ENCODE measurements at regions of chr17 and their contacts with region 1.

Region 1: DNA sequence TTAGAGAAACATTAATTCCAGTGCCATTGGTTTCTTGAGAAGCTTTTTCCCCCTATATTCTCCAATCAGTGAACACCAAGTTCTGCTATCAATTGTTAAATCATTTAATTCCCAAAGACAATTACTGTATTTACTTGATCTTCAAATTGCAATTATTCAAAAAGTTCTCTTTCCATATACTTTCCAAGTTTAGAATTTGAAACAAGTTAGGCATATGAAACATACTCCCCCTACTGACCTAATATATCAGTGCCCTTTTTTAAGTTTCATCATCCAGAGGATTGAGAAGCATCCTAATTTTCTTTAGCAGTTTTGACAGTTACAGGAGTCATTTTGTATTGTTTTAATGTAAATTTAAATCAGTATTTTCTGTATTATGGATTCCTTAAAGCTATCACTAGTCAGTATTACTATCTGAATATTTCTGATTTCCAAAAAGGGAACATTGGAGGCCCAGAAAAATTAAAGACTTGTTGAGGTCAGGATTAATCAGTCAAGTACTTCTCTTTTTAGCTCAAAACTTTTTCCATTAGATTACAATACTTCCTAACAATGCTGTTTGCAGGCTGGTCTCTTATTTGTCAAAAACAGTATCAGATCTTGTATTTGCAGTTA is 16.3 kb downstream of the MEIOC start:
- DNase-seq: peak; percentile 34
- H3K4me3 ChIP-seq: no peak overlapping the region
- H3K27ac ChIP-seq: no peak overlapping the region
- H3K4me1 ChIP-seq: 0 out of 4 replicates have a peak, but pooled peaks cover 0 to 3% of the 10 kb centered on the region in 2 experiments
- H3K27me3 ChIP-seq: no peaks in the 10 kb centered on the region
- CTCF ChIP-seq: peak; percentile 76
- EP300 ChIP-seq: no peak
- RAD21 ChIP-seq: peak; percentile 57

Region 2: GRCh38 chr17:44599298-44600175 is 73.0 kb before region 1 on chr17:
- CTCF ChIA-PET with region 1: no interaction called
- POLR2A ChIA-PET with region 1: no interaction called
- DNase-seq: no peak
- H3K4me3 ChIP-seq: no peak overlapping the region
- H3K27ac ChIP-seq: peak overlapping the region; percentile 64 to 73
- H3K4me1 ChIP-seq: peaks cover 10 to 21% of the 10 kb centered on the region in 2 experiments; a peak in 2 of 4 replicates
- H3K27me3 ChIP-seq: no peaks in the 10 kb centered on the region
- CTCF ChIP-seq: no peak
- EP300 ChIP-seq: no peak
- RAD21 ChIP-seq: no peak

Region 3: DNA sequence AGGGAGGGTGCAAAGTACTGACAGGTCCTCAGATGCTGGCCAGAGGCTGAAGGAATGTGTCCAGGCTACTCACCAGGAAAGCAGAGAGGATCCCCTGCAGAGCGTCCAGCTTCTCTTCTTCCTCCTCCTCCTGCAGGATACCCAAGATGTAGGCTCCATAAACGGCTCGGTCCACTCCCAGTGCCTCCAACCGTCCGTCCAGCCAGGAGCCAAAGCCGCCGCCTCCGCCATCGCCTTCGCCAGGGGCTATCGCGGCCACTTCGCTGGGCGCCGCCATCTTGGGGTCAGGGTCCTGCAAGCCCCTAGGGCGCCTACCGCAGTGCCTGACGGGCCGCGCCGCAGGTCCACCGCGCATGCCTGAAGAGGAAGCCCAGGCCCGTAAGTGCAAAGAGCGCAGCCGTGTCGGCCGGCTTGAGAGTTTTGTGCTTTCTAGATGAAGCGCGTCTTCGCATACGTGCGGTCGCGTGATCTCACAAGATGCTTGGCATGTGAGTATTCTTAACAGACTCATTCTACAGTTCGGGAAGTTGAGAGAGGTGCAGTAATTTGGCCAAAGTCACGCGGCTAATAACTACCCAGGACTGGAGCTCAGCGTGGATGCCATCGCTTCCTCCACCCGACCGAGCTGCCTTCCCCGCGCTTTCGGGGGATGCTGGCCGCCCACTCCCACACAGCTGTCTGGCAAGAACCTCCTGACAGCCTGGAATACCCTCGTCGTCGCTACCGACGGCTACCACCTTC is 17.1 kb after region 1 on chr17 and contains the start of gene CCDC43:
- CTCF ChIA-PET with region 1: interaction called, 29 read pairs
- POLR2A ChIA-PET with region 1: no interaction called
- DNase-seq: peak; percentile 96
- H3K4me3 ChIP-seq: peak within 1 kb of the TSS; percentile 78 to 84
- H3K27ac ChIP-seq: peak within 1 kb of the TSS; percentile 78 to 87
- H3K4me1 ChIP-seq: peaks cover 0 to 7% of the 10 kb centered on the region in 2 experiments; a peak in 1 of 4 replicates
- H3K27me3 ChIP-seq: no peaks in the 10 kb centered on the region
- CTCF ChIP-seq: no peak
- EP300 ChIP-seq: no peak
- RAD21 ChIP-seq: no peak
- polyA plus RNA-seq, gene CCDC43: 6.4 and 8.9 TPM in 2 replicates

Region 4: DNA sequence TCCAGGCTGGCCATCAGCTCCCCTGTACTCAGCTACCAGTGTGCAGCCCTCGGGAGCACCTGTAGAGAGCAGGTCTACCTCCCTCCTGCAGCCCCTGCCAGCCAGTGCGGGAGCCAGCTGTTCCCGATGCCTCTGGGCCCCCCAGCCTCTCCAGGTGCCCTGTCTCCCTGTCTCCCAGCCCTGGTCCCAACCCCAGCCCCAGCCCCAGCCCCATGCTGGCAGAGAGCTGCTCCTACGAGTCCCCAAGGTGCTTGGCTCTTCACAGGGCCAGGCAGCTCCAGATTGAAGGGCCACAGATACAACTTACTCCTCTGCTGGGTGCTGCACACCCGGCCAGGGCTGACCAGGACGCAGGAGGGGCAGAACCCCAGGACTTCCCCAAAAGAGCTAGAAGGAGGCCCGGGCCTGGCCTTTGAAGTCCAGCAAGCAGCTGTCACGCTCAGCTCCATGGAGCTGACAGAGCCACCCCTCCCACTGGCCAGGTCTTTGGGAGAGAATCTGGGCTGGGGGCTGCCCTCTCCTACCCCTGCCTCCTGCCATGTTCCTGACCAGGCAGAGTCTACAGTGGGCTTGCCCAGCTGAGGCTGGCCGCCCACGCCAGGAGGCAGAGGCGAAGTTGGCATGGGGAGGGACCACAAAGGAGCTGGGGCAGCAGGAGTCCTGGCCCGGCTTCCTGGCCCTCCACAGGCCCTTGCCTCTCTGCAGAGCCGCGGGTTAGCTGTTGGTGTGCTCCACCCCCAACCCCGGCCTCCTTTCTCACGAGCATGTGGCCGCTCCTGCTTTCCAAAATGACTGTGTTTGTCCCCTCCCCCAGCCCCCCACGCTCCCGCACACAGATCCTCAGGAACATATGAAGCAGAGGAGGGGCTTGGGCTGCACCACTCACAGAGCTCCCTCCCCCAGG is 76.7 kb after region 1 on chr17:
- CTCF ChIA-PET with region 1: no interaction called
- POLR2A ChIA-PET with region 1: no interaction called
- DNase-seq: no peak
- H3K4me3 ChIP-seq: no peak overlapping the region
- H3K27ac ChIP-seq: no peak overlapping the region
- H3K4me1 ChIP-seq: peaks cover 0 to 7% of the 10 kb centered on the region in 2 experiments; a peak in 1 of 4 replicates
- H3K27me3 ChIP-seq: no peaks in the 10 kb centered on the region
- CTCF ChIP-seq: no peak
- EP300 ChIP-seq: no peak
- RAD21 ChIP-seq: no peak

Measured in SK-N-SH (cell line).